ENCODE measurements at regions of chr16 and their contacts with region 1.

Region 1: GRCh38 chr16:15643048-15643945 is at the start of gene MARF1:
- DNase-seq: peak; percentile 96
- H3K4me3 ChIP-seq: peak within 1 kb of the TSS; percentile 89
- H3K27ac ChIP-seq: peak within 1 kb of the TSS; percentile 89
- H3K4me1 ChIP-seq: peaks cover 68% of the 10 kb centered on the region
- CTCF ChIP-seq: peak; percentile 74
- total RNA-seq, gene MARF1: 18.6 and 20.6 TPM in 2 replicates

Region 2: DNA sequence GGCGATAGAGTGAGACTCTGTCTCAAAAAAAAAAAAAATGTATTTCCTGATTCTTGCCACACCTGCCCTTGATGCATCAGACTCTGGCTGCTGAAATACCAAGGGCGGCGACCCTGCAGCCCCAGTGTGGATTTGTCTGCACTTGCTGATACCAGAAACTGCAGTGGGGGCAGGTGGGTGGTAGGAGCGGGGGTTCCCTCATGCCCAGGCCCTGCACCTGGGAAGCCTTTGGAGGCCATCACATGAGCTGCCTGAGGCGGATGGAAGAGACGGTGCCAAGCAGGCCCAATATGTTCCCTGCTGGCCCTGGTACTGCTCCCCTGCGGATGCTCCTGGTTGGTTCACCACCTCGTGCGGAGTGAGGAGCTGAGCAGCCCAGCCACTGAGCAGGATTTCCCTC is 51.0 kb before region 1 on chr16:
- CTCF ChIA-PET with region 1: no interaction called
- POLR2A ChIA-PET with region 1: interaction called, 4 read pairs
- intact Hi-C with region 1: loop called (anchors 2 kb)
- DNase-seq: no peak
- H3K4me3 ChIP-seq: no peak overlapping the region
- H3K27ac ChIP-seq: no peak overlapping the region
- H3K4me1 ChIP-seq: peaks cover 25% of the 10 kb centered on the region
- CTCF ChIP-seq: no peak

Region 3: GRCh38 chr16:16096121-16096857 is 453.0 kb after region 1 on chr16:
- CTCF ChIA-PET with region 1: no interaction called
- POLR2A ChIA-PET with region 1: no interaction called
- intact Hi-C with region 1: loop called (anchors 10 kb)
- DNase-seq: peak; percentile 82
- H3K4me3 ChIP-seq: peak overlapping the region; percentile 28
- H3K27ac ChIP-seq: peak overlapping the region; percentile 100
- H3K4me1 ChIP-seq: peaks cover 66% of the 10 kb centered on the region
- CTCF ChIP-seq: peak; percentile 78